Naive thymus-derived CD8-positive, alpha-beta T cell (primary cell): ENCODE measurements at regions of chr4 and their contacts with region 1.

Region 1: DNA sequence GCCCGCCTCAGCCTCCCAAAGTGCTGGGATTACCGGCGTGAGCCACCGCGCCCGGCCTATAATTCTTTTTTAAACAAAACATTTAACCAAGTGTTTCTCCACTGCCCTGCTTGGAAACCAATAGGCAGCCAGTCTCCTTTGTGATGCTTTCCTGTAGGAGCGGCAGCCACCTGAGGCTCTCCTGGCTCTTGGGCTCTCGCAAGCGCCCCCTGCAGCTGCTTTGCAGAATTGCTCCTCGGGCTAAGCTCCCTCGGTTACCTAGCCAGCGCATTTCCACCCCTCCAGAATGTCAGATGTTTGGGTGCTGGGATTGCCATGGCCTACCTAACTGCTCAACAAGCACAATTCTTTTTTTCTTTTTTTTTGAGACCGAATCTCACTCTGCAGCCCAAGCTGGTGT is 7.7 kb downstream of the S100P start:
- DNase-seq: peak in 3 of 10 donors; percentile 18 to 38 (median 37)
- ATAC-seq: no peak
- H3K4me3 Mint-ChIP-seq: no peak overlapping the region
- H3K27ac Mint-ChIP-seq: peak overlapping the region in 5 of 10 donors; percentile 4 to 68 (median 13)
- H3K4me1 Mint-ChIP-seq: peaks cover 42 to 74% (median 67%) of the 10 kb centered on the region in 4 donors
- H3K27me3 Mint-ChIP-seq: no peaks in the 10 kb centered on the region

Region 2: DNA sequence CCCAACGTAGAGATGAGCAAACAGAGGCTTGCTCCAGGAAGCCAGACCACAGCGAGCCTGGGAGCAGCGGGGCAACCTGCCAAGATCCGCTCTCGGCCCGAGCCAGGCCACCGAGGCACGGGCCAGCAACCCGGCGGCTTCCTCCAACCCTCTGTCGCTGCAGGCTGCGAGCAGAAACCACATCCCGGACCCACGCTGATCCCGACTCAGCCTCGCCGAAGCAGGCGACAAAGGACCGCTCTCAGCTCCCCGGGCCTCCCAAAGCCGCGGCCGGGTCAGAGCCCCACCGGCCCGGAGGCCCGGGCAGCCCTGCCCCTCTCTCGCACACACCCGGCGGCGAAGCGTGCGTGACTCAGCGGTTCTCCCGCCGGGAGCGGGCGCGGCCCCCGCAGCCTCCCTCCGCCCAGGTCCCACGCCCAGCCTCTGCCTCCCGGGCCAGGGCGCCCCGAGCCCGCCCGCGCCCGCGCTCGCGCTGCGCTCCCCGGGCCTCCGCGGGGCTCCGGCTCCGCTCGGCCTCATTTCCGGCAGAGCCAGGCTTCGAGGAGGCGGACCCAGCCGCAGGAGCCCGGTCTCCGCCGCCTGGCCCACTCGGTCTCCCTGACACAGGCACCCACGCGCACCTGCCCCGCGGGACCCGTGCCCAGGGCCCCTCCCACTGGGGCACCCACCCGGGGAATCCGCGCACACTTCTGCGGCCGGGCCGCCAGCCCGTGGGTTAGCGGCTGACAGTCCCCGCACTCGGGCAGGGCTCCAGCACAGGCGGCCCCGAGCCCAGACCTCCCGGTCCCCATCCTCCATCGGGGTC is 230.7 kb before region 1 on chr4:
- POLR2A ChIA-PET with region 1: no interaction called
- DNase-seq: peak in 1 of 10 donors; percentile 54
- ATAC-seq: no peak
- H3K4me3 Mint-ChIP-seq: peak overlapping the region in 9 of 10 donors; percentile 17 to 70 (median 52)
- H3K27ac Mint-ChIP-seq: no peak overlapping the region
- H3K4me1 Mint-ChIP-seq: peaks cover 3 to 13% (median 9%) of the 10 kb centered on the region in 4 donors
- H3K27me3 Mint-ChIP-seq: peaks cover 32 to 76% (median 61%) of the 10 kb centered on the region in 5 donors

Region 3: DNA sequence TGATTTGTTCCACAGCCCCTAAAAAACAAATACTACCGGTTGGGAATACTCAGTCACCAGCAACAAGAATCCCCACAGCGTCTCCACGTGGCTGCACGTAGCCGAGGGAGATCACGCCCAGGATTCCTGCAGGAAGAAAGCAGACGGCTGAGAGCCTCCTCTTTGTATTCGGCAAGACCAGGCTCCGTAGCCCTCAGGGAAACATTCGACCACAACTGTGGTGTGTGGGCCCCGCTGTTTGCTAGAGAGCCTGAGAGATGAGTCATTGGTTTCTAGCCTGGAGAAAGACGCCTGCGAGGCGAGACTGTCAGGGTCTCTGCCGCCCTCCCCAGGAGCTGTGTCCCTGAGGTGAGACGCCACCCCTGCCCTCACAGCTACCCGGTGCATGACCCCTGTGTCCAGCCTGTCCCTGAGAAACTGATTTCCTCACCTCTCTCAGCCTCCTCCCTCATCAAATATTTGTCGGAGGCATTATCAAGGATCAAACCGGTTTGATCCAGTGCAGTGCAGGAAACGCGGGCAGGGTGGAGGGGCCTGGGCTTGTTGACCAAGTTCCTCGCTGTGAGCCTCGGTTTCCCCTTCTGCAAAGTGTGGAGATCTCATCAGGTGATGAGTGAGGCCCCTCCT is 12.4 kb before region 1 on chr4:
- POLR2A ChIA-PET with region 1: interaction called, 521 read pairs
- DNase-seq: peak; percentile 39 to 86 (median 60)
- ATAC-seq: peak; percentile 76 to 90
- H3K4me3 Mint-ChIP-seq: peak overlapping the region; percentile 73 to 95 (median 84)
- H3K27ac Mint-ChIP-seq: peak overlapping the region; percentile 88 to 99 (median 97)
- H3K4me1 Mint-ChIP-seq: peaks cover 39 to 78% (median 70%) of the 10 kb centered on the region in 4 donors
- H3K27me3 Mint-ChIP-seq: no peaks in the 10 kb centered on the region